H1 (cell line): ENCODE measurements at regions of chr3 and their contacts with region 1.

Region 1: GRCh38 chr3:42701142-42702065 is 1.2 kb downstream of the HHATL start:
- DNase-seq: peak; percentile 31 to 92
- H3K4me3 ChIP-seq: no peak overlapping the region
- H3K27ac ChIP-seq: no peak overlapping the region
- H3K4me1 ChIP-seq: peaks cover 0 to 12% (median 0%) of the 10 kb centered on the region in 4 experiments; a peak in 3 of 7 replicates
- H3K27me3 ChIP-seq: no peaks in the 10 kb centered on the region
- CTCF ChIP-seq: no peak
- EP300 ChIP-seq: no peak
- POLR2A ChIP-seq: no peak
- RAD21 ChIP-seq: peak in 1 of 2 experiments; percentile 2; a peak in 1 of 4 replicates

Region 2: DNA sequence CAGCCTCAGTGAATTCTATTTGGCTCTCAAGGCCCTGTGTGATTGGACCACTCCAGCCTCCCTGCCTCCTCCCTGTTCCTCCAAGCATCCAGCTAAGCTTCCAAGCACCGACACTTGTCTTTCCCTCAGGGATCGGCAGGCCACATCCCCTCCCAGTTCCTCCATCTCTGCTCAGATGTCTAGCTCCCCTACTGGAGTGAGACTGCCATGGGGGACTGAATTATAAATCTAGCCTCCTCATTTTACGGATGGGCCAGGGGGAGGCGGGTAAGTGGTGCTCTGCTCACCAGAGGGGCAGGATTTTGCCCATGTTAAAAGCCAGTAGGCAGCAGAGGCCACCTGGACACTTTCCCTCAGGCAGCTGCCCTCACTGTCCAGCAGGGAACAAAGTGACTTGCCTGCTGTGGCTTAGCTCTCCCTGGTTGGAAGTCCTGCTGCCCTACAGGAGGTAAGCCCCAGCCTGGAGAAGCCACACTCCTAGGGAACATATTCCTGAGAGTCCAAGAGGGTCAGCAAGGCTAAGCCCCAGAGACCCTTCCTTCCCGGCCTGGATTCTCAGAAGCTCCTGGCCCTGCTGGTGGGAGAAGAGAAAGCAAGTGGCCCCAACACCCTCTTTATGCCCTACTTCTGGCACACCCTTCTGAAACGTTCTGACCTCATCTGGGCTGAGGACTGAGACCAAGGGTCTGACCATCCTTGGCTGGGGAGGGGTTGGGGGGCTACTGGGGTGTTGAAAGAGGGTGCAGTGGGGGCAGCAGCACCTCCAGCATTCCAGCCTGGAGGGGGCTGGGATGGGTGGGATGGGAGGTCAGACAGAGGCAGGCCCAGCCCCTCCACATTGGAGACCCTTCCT is 10.3 kb after region 1 on chr3:
- CTCF ChIA-PET with region 1: interaction called, 27 read pairs
- POLR2A ChIA-PET with region 1: interaction called, 9 read pairs
- DNase-seq: peak in 1 of 2 experiments; percentile 44
- H3K4me3 ChIP-seq: no peak overlapping the region
- H3K27ac ChIP-seq: no peak overlapping the region
- H3K4me1 ChIP-seq: no peaks in the 10 kb centered on the region; a peak in 2 of 7 replicates
- H3K27me3 ChIP-seq: no peaks in the 10 kb centered on the region; a peak in 1 of 7 replicates
- CTCF ChIP-seq: peak in 2 of 3 experiments; percentile 26 to 28; a peak in 2 of 4 replicates
- EP300 ChIP-seq: no peak
- POLR2A ChIP-seq: no peak
- RAD21 ChIP-seq: 0 out of 4 replicates have a peak, but pooled peaks of 1 of the 2 experiments have one; percentile 10

Region 3: GRCh38 chr3:42772670-42773408 is 71.4 kb after region 1 on chr3 and contains the start of gene CCDC13:
- CTCF ChIA-PET with region 1: no interaction called
- POLR2A ChIA-PET with region 1: no interaction called
- DNase-seq: peak; percentile 64 to 98
- H3K4me3 ChIP-seq: peak within 1 kb of the TSS; percentile 58 to 65 (median 61)
- H3K27ac ChIP-seq: no peak within 1 kb of the TSS
- H3K4me1 ChIP-seq: 0 out of 7 replicates have a peak, but pooled peaks cover 0 to 4% (median 0%) of the 10 kb centered on the region in 4 experiments
- H3K27me3 ChIP-seq: peaks cover 0 to 6% (median 5%) of the 10 kb centered on the region in 4 experiments; a peak in 3 of 7 replicates
- CTCF ChIP-seq: no peak
- EP300 ChIP-seq: 0 out of 3 replicates have a peak, but pooled peaks of 1 of the 2 experiments have one; percentile 12
- POLR2A ChIP-seq: no peak
- RAD21 ChIP-seq: no peak
- total RNA-seq, gene CCDC13: not detected in 2 replicates